PC-9 (cell line): ENCODE measurements at regions of chr10 and their contacts with region 1.

Region 1: GRCh38 chr10:62384057-62384446 is 9.9 kb downstream of the ZNF365 start:
- DNase-seq: peak; percentile 66 to 99
- H3K4me3 ChIP-seq: peak overlapping the region; percentile 9; the same call in 1 of the 2 replicates
- H3K27ac ChIP-seq: peak overlapping the region; percentile 88
- H3K4me1 ChIP-seq: peaks cover 48% of the 10 kb centered on the region
- H3K27me3 ChIP-seq: no peaks in the 10 kb centered on the region
- CTCF ChIP-seq: no peak

Region 2: GRCh38 chr10:61786728-61787127 is 597.3 kb before region 1 on chr10:
- CTCF ChIA-PET with region 1: no interaction called
- POLR2A ChIA-PET with region 1: no interaction called
- intact Hi-C with region 1: loop called (anchors 10 kb)
- DNase-seq: peak; percentile 11 to 56
- H3K4me3 ChIP-seq: peak overlapping the region; percentile 46; the same call in 1 of the 2 replicates
- H3K27ac ChIP-seq: peak overlapping the region; percentile 51
- H3K4me1 ChIP-seq: peaks cover 26% of the 10 kb centered on the region
- H3K27me3 ChIP-seq: no peaks in the 10 kb centered on the region
- CTCF ChIP-seq: no peak

Region 3: DNA sequence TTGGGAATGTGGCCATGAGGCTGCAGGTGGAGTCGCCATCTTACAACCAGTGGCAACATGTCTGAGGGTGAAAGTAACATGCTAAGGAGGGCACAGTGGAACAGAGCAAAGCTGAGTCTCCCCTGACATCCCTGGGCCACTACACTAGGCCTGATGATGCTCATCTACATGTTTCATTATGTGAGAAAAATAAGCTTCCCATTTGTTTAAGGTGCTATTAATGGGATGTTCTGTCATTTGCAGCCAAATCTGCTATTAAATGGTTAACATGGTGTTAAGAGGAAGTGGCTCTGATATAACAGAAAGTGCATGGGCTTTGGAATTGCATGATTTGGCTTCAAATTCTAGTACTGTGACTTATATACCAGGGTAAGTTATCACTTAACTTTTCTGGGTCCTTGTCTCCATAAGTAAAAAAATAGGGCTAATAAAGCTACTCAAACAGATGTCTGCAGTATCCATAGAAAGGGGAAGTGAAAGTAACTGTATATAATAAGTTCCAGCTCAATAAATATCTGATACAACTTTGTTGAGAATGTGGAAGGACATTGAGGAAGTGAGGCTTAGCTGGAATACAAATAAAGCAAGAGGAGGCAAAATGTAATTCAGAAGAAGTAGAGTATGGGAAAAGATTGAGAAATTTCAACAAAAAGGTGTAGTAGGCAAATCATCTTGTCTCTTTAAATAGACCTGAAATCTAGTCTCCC is 274.3 kb before region 1 on chr10:
- CTCF ChIA-PET with region 1: no interaction called
- POLR2A ChIA-PET with region 1: no interaction called
- intact Hi-C with region 1: loop called (anchors 1 kb)
- DNase-seq: no peak
- H3K4me3 ChIP-seq: no peak overlapping the region
- H3K27ac ChIP-seq: peak overlapping the region; percentile 49
- H3K4me1 ChIP-seq: peaks cover 80% of the 10 kb centered on the region
- H3K27me3 ChIP-seq: no peaks in the 10 kb centered on the region
- CTCF ChIP-seq: no peak

Region 4: DNA sequence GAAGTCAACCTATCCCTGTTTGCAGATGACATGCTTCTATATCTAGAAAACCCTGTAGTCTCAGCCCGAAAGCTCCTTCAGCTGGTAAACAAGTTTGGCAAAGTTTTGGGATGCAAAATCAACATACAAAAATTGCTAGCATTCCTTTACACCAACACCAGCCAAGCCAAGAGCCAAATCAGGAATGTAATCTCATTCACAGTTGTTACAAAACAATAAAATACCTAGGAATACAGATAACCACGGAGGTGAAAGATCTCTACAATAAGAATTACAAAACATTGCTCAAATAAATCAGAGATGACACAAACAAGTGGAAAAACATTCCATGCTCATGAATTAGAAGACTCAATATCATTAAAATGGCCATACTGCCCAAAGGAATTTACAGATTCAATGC is 60.3 kb before region 1 on chr10:
- CTCF ChIA-PET with region 1: no interaction called
- POLR2A ChIA-PET with region 1: no interaction called
- intact Hi-C with region 1: loop called (anchors 5 kb)
- DNase-seq: peak; percentile 47 to 95
- H3K4me3 ChIP-seq: no peak overlapping the region
- H3K27ac ChIP-seq: peak overlapping the region; percentile 15; the same call in 1 of the 2 replicates
- H3K4me1 ChIP-seq: peaks cover 11% of the 10 kb centered on the region
- H3K27me3 ChIP-seq: no peaks in the 10 kb centered on the region
- CTCF ChIP-seq: no peak

Region 5: DNA sequence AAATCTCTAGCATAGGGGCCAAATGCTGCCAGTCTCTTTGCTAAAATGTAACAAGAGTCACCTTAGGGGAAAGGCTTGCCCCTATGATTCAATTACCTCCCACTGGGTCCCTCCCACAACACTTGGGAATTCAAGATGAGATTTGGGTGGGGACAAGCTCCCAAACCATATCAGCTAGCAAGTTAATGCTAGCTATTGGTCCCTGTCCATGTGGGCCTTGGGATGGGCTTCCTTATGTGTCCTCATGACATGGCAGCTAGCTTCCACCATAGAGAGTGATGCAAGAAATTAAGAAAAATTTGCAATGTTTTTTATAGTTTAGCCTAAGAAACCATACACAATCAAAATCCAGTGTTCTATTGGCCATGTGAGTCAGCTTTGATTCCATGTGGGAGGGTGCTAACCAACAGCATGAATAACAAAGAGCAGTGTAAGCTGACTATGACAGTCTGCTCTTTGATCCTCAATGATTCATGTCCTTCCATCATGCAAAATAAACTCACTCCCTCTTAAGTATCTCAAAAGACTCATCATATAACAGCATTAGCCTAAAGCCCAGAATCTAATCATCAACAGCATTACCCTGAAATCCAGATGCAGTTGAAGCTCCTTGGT is 31.6 kb before region 1 on chr10:
- CTCF ChIA-PET with region 1: no interaction called
- POLR2A ChIA-PET with region 1: no interaction called
- intact Hi-C with region 1: no loop called
- DNase-seq: no peak
- H3K4me3 ChIP-seq: no peak overlapping the region
- H3K27ac ChIP-seq: no peak overlapping the region
- H3K4me1 ChIP-seq: no peaks in the 10 kb centered on the region
- H3K27me3 ChIP-seq: no peaks in the 10 kb centered on the region
- CTCF ChIP-seq: no peak

Region 6: GRCh38 chr10:62454696-62455389 is 70.8 kb after region 1 on chr10:
- CTCF ChIA-PET with region 1: no interaction called
- POLR2A ChIA-PET with region 1: no interaction called
- intact Hi-C with region 1: loop called (anchors 1 kb)
- DNase-seq: peak; percentile 67 to 81
- H3K4me3 ChIP-seq: peak overlapping the region; percentile 3; the same call in 1 of the 2 replicates
- H3K27ac ChIP-seq: peak overlapping the region; percentile 54
- H3K4me1 ChIP-seq: peaks cover 23% of the 10 kb centered on the region
- H3K27me3 ChIP-seq: no peaks in the 10 kb centered on the region
- CTCF ChIP-seq: no peak

Region 7: DNA sequence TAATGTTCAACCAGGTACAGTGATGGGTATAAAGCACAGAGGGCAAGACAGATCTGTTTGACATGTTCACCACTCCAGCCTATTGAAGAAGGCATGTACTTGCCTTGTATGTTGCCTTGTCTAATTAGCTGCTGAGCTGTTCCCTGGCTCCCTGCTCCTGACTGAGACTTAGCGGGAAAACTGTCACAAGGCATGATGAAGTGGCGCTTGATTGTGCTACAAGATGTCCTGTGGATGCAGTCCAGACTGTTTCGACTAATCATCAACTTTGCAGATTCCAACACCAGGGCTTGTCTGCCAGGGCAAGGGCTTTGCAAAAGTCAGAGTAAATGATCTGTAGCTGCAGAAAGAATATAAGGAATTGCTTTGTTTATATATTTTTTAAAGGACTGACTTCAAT is 612.9 kb after region 1 on chr10:
- CTCF ChIA-PET with region 1: no interaction called
- POLR2A ChIA-PET with region 1: no interaction called
- intact Hi-C with region 1: no loop called
- DNase-seq: no peak
- H3K4me3 ChIP-seq: no peak overlapping the region
- H3K27ac ChIP-seq: no peak overlapping the region
- H3K4me1 ChIP-seq: peaks cover 24% of the 10 kb centered on the region
- H3K27me3 ChIP-seq: no peaks in the 10 kb centered on the region
- CTCF ChIP-seq: no peak